Naive thymus-derived CD4-positive, alpha-beta T cell (primary cell): ENCODE measurements at regions of chr12 and their contacts with region 1.

Region 1: DNA sequence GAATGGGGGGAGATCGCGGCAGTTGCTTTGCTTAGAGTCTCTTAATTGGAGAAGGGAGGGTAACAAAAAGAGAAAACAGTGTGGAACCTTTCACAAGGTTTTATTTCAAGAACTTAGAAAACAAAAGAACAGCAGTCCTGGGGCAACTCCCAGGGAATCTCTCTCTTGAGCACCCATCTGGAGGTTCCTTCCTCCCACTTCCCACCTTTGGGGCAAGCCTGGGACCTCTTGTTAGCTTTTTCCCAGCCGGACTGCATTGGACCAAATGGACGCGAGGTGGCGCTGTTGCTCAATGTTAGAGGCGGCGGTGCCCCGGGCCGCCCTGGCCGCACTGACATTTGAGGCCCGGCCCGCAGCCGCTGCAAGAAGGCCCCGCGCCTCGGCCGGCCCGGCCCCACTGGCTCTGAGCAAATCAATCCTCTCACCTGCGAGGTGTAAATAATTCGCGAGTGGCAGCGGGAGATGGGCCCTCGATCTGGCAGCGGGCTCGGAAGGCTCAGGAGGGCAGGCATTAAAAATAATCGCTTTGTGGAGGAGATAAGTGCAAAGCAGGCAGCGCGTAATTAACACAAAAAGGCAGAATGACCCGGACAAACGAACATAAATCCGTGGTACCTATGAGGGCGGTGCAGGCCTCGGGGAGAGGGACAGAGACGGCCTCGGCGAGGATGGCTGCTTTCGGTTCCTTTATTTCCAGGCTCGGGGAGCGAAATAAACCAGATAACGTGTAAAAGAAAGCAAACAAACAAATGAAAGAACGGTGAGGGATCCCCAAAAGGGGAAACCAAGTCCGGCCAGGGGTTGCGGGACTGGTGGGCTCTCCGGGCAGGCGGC is 2.7 kb upstream of the HOXC8 start:
- DNase-seq: peak; percentile 67 to 89 (median 79)
- ATAC-seq: peak; percentile 90
- H3K4me3 ChIP-seq: peak overlapping the region; percentile 45
- H3K4me3 Mint-ChIP-seq: peak overlapping the region; percentile 79 to 91 (median 84)
- H3K27ac ChIP-seq: no peak overlapping the region
- H3K27ac Mint-ChIP-seq: peak overlapping the region in 1 of 9 donors; percentile 6
- H3K4me1 ChIP-seq: peaks cover 6 to 21% of the 10 kb centered on the region in 2 donors
- H3K4me1 Mint-ChIP-seq: peaks cover 9 to 54% (median 24%) of the 10 kb centered on the region in 7 donors
- H3K27me3 ChIP-seq: peaks cover 24 to 77% of the 10 kb centered on the region in 2 donors
- H3K27me3 Mint-ChIP-seq: peaks cover 90 to 97% (median 92%) of the 10 kb centered on the region in 5 donors

Region 2: DNA sequence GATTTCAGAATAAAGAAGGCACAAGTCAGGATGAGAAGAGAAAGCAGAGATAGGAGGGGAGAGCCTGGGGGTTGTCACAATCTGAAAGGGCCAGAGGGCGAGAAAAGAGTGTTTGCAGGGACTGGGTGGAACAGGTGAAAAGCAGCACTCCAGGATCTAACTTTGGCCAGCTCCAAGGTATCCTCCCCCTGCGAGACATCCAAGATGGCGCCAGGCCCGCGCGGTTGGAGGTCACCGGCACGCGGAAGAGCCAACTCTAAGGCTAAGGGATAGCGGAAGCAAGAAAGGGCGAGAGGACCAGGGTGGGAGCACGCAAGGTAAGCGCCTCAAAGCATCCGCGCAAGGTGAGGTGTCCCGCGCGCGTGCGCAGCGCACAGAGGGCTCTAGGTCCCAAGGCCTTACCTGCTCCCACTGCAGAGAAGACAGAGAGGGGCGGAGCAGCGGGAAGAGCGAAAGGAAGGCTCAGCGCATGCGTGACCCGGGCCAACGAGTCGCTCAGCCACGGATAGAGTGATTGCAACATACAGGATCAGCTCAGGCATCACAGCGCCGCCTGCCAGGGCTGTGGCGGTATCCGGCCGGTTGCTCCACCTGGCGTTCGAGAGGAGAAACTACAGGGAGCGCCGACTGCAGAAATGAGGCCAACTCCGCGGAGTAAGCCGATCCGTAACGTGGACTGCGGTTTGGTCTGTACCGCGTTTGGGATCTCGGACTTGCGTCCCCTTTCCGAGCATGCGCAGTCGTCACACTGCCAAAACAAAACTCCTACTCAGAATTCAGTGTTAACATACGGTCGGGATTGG is 330.2 kb before region 1 on chr12 and contains the start of gene ATP5MC2:
- CTCF ChIA-PET with region 1: no interaction called
- POLR2A ChIA-PET with region 1: no interaction called
- intact Hi-C with region 1: no loop called
- DNase-seq: peak; percentile 92 to 98 (median 97)
- ATAC-seq: peak; percentile 97
- H3K4me3 ChIP-seq: peak within 1 kb of the TSS; percentile 64
- H3K4me3 Mint-ChIP-seq: peak within 1 kb of the TSS; percentile 91 to 99 (median 94)
- H3K27ac ChIP-seq: peak within 1 kb of the TSS; percentile 76
- H3K27ac Mint-ChIP-seq: peak within 1 kb of the TSS; percentile 91 to 98 (median 95)
- H3K4me1 ChIP-seq: peaks cover 7 to 21% of the 10 kb centered on the region in 2 donors
- H3K4me1 Mint-ChIP-seq: peaks cover 21 to 38% (median 32%) of the 10 kb centered on the region in 7 donors
- H3K27me3 ChIP-seq: no peaks in the 10 kb centered on the region
- H3K27me3 Mint-ChIP-seq: peaks cover 16 to 35% (median 21%) of the 10 kb centered on the region in 5 donors
- total RNA-seq, gene ATP5MC2: 237 to 332 (median 275) TPM

Region 3: GRCh38 chr12:54024127-54024526 is 18.1 kb after region 1 on chr12:
- CTCF ChIA-PET with region 1: interaction called, 3 read pairs
- POLR2A ChIA-PET with region 1: no interaction called
- intact Hi-C with region 1: loop called in 1 of 2 experiments (anchors 2 kb)
- DNase-seq: no peak
- ATAC-seq: no peak
- H3K4me3 ChIP-seq: no peak overlapping the region
- H3K4me3 Mint-ChIP-seq: peak overlapping the region in 1 of 10 donors; percentile 21
- H3K27ac ChIP-seq: no peak overlapping the region
- H3K27ac Mint-ChIP-seq: no peak overlapping the region
- H3K4me1 ChIP-seq: peaks cover 0 to 6% of the 10 kb centered on the region in 2 donors
- H3K4me1 Mint-ChIP-seq: peaks cover 6 to 18% (median 12%) of the 10 kb centered on the region in 7 donors
- H3K27me3 ChIP-seq: peaks cover 14 to 52% of the 10 kb centered on the region in 2 donors
- H3K27me3 Mint-ChIP-seq: peaks cover 86 to 99% (median 88%) of the 10 kb centered on the region in 5 donors

Region 4: DNA sequence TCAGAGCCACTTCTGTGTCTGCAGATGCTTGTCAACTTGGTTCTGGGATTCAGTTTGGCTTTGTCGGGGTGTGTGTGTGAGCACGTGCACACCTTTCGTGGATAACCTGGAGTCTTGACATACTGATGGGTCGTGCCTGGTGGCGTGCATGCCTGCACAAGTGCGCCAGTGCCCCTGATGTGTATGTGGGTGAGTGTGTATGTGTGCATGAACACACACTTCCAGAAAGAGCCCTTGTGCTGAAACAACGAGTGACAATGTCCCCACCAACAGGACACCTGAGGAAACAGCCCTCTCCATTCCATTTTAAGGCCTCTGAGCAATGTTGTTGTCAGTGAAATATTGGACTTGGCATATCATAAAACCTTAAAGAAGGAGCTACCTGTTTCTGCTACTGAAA is 128.8 kb after region 1 on chr12:
- CTCF ChIA-PET with region 1: no interaction called
- POLR2A ChIA-PET with region 1: no interaction called
- intact Hi-C with region 1: loop called in 1 of 2 experiments (anchors 5 kb)
- DNase-seq: no peak
- ATAC-seq: no peak
- H3K4me3 ChIP-seq: no peak overlapping the region
- H3K4me3 Mint-ChIP-seq: no peak overlapping the region
- H3K27ac ChIP-seq: no peak overlapping the region
- H3K27ac Mint-ChIP-seq: no peak overlapping the region
- H3K4me1 ChIP-seq: no peaks in the 10 kb centered on the region
- H3K4me1 Mint-ChIP-seq: no peaks in the 10 kb centered on the region
- H3K27me3 ChIP-seq: no peaks in the 10 kb centered on the region
- H3K27me3 Mint-ChIP-seq: peaks cover 15 to 79% (median 53%) of the 10 kb centered on the region in 5 donors

Region 5: DNA sequence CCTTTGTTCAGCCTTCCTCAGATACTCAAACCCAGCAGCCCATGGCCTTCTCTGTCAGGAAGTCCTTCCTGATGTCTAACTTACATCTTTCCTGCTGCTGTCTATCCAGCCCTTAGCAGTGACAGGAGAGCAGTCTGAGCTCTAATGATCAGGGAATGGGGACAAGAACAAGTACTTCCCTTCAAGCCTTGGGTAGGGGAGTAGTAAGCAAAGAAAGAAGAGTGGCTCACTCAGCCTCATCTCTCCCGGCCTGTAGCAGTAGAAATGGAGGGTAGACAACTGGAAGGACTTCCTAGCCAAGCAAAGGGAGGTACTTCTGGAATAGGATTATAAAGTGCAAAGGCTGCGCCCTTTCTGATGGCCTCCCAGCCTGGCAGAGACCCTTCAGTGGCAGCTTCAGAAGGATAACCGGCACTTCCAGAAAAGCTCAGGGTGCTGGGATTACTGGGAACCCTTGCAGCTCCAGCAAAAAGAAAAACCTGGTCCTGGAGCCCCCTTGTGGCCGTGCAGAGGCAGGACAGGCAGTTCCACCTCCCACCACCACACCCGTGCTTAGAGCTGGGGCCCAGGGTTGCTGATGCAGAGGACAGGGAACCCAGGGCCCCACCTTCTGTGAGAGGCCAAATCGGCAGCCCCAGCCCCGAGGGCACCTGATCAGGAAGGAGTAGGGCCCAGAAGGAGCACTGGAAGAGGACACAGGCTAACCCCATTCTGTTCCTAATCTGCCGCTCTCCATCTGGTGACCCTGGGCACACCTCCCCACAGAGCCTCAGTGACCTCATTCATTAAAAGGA is 195.1 kb after region 1 on chr12:
- CTCF ChIA-PET with region 1: interaction called, 71 read pairs
- POLR2A ChIA-PET with region 1: no interaction called
- intact Hi-C with region 1: loop called (anchors 1 kb)
- DNase-seq: peak; percentile 45 to 70 (median 59)
- ATAC-seq: peak; percentile 94
- H3K4me3 ChIP-seq: no peak overlapping the region
- H3K4me3 Mint-ChIP-seq: no peak overlapping the region
- H3K27ac ChIP-seq: no peak overlapping the region
- H3K27ac Mint-ChIP-seq: no peak overlapping the region
- H3K4me1 ChIP-seq: no peaks in the 10 kb centered on the region
- H3K4me1 Mint-ChIP-seq: no peaks in the 10 kb centered on the region
- H3K27me3 ChIP-seq: peaks cover 6 to 16% of the 10 kb centered on the region in 2 donors
- H3K27me3 Mint-ChIP-seq: peaks cover 70 to 81% (median 73%) of the 10 kb centered on the region in 5 donors

Region 6: DNA sequence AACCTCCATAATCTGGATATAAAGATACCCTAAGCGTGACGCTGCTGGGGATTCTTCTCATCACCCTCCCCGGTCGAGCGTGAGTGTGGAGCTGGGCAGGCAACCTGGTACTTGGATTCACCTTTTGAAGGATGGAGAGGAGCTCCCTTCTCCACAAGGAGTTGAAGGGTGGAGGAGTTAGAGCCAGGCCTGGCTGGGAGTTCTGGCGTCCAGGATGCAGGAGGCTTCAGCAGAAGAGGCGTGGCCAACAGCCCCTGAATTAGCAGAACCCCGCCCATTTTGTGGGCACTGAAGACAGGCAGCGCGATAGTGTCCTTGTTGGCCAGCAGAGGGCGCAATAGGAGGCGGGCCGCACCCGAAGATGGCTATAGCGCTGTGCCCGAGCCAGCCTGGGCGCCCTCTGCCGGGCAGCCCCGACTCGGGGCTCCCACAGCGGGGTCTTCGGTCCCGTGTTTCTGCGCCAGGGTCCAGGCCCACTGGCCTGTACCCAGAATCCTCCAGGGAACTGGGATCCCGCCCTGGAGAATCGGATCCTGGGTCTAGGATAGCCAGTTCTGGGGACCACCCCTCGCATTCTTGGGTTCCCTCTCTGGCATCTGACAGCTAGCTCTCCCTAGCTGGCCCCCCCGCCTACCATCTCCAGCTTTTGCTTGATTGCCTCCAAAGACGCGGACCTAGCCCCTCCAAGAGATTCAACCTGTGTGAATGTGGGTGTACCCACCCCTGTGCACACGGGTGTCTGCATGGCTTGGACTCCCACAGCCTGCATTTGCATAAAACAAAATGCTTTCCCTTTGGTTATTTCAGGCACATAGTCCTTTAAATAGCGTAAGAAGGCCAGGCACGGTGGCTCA is 208.7 kb after region 1 on chr12:
- CTCF ChIA-PET with region 1: interaction called, 71 read pairs
- POLR2A ChIA-PET with region 1: interaction called, 3 read pairs
- intact Hi-C with region 1: loop called in 1 of 2 experiments (anchors 1 kb)
- DNase-seq: peak; percentile 80 to 90 (median 89)
- ATAC-seq: peak; percentile 95
- H3K4me3 ChIP-seq: peak overlapping the region; percentile 56
- H3K4me3 Mint-ChIP-seq: peak overlapping the region; percentile 72 to 93 (median 82)
- H3K27ac ChIP-seq: no peak overlapping the region
- H3K27ac Mint-ChIP-seq: peak overlapping the region in 2 of 9 donors; percentile 28 to 52
- H3K4me1 ChIP-seq: peaks cover 25 to 35% of the 10 kb centered on the region in 2 donors
- H3K4me1 Mint-ChIP-seq: peaks cover 18 to 52% (median 31%) of the 10 kb centered on the region in 7 donors
- H3K27me3 ChIP-seq: no peaks in the 10 kb centered on the region
- H3K27me3 Mint-ChIP-seq: peaks cover 0 to 40% (median 5%) of the 10 kb centered on the region in 5 donors